IMR-90 (cell line): ENCODE measurements at regions of chr5 and their contacts with region 1.

Region 1: GRCh38 chr5:167582283-167582682 is 709.2 kb upstream of the WWC1 start:
- DNase-seq: peak; percentile 8
- ATAC-seq: 0 out of 2 replicates have a peak, but pooled peaks have one; percentile 37
- H3K4me3 ChIP-seq: no peak overlapping the region
- H3K27ac ChIP-seq: no peak overlapping the region
- H3K4me1 ChIP-seq: no peaks in the 10 kb centered on the region
- H3K27me3 ChIP-seq: no peaks in the 10 kb centered on the region; the same call in 1 of the 2 replicates
- CTCF ChIP-seq: peak; percentile 57
- POLR2A ChIP-seq: no peak
- RAD21 ChIP-seq: peak; percentile 67

Region 2: GRCh38 chr5:167355346-167355745 is 226.9 kb before region 1 on chr5:
- CTCF ChIA-PET with region 1: no interaction called
- POLR2A ChIA-PET with region 1: no interaction called
- dilution Hi-C with region 1: no loop called
- in situ Hi-C with region 1: no loop called
- intact Hi-C with region 1: no loop called
- DNase-seq: no peak
- ATAC-seq: no peak
- H3K4me3 ChIP-seq: no peak overlapping the region
- H3K27ac ChIP-seq: no peak overlapping the region
- H3K4me1 ChIP-seq: no peaks in the 10 kb centered on the region
- H3K27me3 ChIP-seq: no peaks in the 10 kb centered on the region
- CTCF ChIP-seq: no peak
- POLR2A ChIP-seq: no peak
- RAD21 ChIP-seq: no peak

Region 3: DNA sequence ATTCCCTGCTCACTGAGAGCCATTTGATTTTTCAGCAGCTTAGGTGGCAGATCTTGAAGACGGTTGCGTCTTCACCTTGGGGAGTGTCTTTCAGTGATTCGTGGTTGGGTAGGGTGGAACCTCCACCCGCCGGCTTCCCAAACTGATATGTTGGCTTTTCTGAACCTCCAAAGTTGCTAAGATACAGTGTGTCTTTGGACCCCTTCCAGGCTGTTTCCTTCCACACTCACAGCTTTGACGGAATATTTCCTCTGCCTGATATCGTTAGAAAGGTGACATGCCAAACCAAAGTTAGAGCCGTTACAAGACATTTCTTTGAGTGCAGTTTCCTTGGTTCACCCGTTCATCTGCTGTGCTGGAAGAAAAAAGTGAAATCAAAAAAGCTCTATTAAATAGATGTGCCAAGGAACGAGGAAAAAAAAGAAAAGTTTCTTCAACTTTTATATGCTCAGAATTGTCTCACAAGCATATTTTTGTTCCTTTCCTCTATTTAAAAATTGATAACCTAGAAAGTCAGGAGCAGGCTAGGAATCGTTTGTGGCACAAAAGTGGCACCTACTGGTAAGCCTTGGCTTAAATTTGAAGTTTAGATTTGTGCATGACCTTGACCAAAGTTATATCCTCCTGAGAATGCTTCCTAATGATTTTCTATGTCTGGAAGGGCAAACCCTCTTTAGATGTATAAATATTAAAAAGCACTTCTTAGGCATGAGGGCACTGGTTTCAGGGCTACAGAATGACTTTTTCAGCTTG is 438.4 kb after region 1 on chr5:
- CTCF ChIA-PET with region 1: interaction called, 5 read pairs
- POLR2A ChIA-PET with region 1: no interaction called
- dilution Hi-C with region 1: no loop called
- in situ Hi-C with region 1: no loop called
- intact Hi-C with region 1: loop called (anchors 5 kb)
- DNase-seq: peak; percentile 8
- ATAC-seq: peak; percentile 37; the same call in 1 of the 2 replicates
- H3K4me3 ChIP-seq: no peak overlapping the region
- H3K27ac ChIP-seq: no peak overlapping the region
- H3K4me1 ChIP-seq: no peaks in the 10 kb centered on the region
- H3K27me3 ChIP-seq: peaks cover 20% of the 10 kb centered on the region
- CTCF ChIP-seq: peak; percentile 41
- POLR2A ChIP-seq: no peak
- RAD21 ChIP-seq: peak; percentile 60

Region 4: DNA sequence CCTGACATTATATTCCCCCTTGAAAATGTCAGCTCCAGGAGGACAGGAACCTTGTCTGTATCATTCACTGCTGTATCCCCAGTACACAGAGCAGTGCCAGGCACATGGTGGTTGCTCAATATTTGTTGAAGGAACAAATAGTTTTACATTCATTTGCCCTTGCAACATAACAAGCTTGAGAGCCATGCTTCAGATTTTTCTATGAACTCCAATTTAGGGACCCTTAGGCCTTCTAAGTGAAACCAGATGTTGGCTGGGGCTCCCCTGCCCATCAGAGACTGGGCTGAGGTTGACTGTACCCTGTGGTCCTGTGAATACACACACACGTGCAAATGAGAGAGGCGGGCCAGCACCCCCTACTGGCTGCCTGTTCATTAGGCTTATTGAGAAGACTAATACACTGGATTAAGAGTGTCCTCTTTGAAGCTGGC is 494.3 kb after region 1 on chr5:
- CTCF ChIA-PET with region 1: interaction called, 3 read pairs
- POLR2A ChIA-PET with region 1: no interaction called
- dilution Hi-C with region 1: no loop called
- in situ Hi-C with region 1: no loop called
- intact Hi-C with region 1: loop called (anchors 1 kb)
- DNase-seq: peak; percentile 13
- ATAC-seq: peak; percentile 65
- H3K4me3 ChIP-seq: no peak overlapping the region
- H3K27ac ChIP-seq: no peak overlapping the region
- H3K4me1 ChIP-seq: no peaks in the 10 kb centered on the region
- H3K27me3 ChIP-seq: no peaks in the 10 kb centered on the region
- CTCF ChIP-seq: peak; percentile 44
- POLR2A ChIP-seq: no peak
- RAD21 ChIP-seq: peak; percentile 49

Region 5: DNA sequence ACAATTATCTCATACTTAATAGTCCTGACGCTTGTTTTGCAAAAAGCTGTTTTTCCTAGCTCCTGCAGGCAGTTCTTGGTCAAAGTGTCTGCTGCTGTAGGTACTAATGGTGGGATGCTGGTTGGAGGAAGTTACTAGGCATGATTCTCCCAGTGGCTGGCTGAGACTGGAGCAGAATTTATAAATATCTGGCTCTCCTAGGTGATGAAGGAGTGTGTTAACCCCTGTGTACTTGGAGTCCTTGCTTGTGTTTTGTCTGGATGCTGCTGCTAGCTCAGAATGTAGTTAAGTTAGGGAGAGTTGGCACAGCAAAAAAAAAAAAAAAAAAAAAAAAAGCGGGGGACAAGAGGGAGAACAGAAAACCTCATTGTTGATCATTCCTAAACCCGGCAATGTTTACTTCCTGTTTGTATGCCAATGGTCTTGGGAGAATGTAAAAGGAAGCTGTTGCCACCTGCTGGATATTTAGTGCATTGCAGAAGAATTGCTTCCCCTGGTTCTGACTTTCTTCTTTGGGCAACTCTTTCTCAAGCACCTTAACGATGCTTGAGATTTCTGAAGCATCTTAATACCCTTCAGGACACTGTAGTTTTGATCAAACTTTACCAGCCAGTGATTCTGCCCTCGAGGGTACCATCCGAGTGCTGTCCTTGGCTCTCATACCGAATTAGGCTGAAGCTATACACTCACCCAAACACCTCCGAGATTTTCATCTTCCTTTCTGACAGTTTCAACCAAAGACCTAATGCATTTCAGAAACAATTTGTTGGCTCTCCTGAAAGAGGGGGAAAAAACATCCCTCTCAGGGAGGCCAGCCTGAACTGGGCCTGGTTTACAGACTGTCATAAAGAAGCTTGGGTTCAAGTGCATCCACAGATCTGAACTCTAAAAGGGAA is 637.5 kb after region 1 on chr5:
- CTCF ChIA-PET with region 1: interaction called, 3 read pairs
- POLR2A ChIA-PET with region 1: no interaction called
- dilution Hi-C with region 1: no loop called
- in situ Hi-C with region 1: loop called (anchors 5 kb)
- intact Hi-C with region 1: loop called (anchors 1 kb)
- DNase-seq: peak; percentile 63
- ATAC-seq: peak; percentile 92
- H3K4me3 ChIP-seq: no peak overlapping the region
- H3K27ac ChIP-seq: no peak overlapping the region
- H3K4me1 ChIP-seq: no peaks in the 10 kb centered on the region
- H3K27me3 ChIP-seq: peaks cover 3% of the 10 kb centered on the region; the same call in 1 of the 2 replicates
- CTCF ChIP-seq: peak; percentile 89
- POLR2A ChIP-seq: no peak
- RAD21 ChIP-seq: peak; percentile 87